ENCODE measurements at regions of chr2 and their contacts with region 1.

Region 1: DNA sequence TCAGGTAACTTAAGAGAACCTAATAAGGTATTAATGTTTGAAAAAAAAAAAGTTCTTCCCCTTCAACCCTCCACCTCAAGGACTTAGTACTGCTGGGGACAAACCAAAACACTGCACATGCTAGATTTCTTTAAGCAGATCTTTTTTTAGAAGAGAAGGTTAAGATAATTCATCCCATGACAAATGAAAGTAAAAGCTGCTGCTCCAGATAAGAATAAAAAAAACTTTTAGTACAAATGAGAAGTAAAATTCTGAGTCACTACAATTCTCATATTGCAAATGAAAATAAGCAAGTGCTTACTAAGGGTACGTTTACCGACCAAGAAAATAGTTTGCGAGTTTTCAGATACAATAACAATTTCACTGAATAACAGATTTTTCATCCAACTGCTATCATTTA is 8.9 kb downstream of the STAM2 start:
- DNase-seq: peak; percentile 81
- ATAC-seq: peak; percentile 83
- H3K4me3 ChIP-seq: no peak overlapping the region
- H3K27ac ChIP-seq: no peak overlapping the region
- H3K4me1 ChIP-seq: peaks cover 8% of the 10 kb centered on the region
- H3K27me3 ChIP-seq: no peaks in the 10 kb centered on the region
- CTCF ChIP-seq: no peak
- POLR2A ChIP-seq: no peak
- RAD21 ChIP-seq: no peak

Region 2: DNA sequence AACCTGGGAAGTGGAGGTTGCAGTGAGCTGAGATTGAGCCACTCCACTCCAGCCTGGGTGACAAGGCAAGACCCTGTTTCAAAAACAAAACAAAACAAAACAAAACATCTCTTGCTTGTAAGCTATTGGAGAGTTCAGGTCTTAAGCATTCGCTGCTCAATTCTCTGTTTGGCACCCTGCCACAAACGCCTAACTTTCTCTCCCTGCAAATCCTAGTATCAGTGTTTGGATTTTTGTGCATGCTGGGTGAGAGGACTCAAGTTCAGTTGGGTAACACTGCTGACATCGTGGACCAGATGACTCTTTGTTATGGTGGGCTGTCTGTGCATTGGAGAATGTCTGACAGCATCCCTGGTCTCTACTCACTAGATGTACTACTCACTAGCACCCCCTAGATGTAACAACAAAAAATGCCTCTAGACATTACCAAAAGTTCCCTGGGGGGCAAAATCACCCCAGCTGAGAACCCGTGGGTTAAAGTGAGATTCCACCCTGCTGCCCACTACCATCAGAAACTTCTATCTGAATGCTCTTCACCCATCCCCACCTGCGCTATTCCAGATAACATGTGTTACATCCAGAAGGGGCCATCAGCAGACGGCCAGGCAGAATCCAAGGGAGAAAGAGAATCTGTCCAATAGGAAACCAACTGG is 118.7 kb before region 1 on chr2:
- CTCF ChIA-PET with region 1: no interaction called
- POLR2A ChIA-PET with region 1: no interaction called
- dilution Hi-C with region 1: no loop called
- in situ Hi-C with region 1: loop called (anchors 10 kb)
- intact Hi-C with region 1: no loop called
- DNase-seq: no peak
- ATAC-seq: no peak
- H3K4me3 ChIP-seq: no peak overlapping the region
- H3K27ac ChIP-seq: no peak overlapping the region
- H3K4me1 ChIP-seq: no peaks in the 10 kb centered on the region
- H3K27me3 ChIP-seq: peaks cover 27% of the 10 kb centered on the region
- CTCF ChIP-seq: no peak; the same call in 1 of the 2 replicates
- POLR2A ChIP-seq: no peak
- RAD21 ChIP-seq: no peak

Region 3: GRCh38 chr2:152062125-152063091 is 104.2 kb before region 1 on chr2:
- CTCF ChIA-PET with region 1: no interaction called
- POLR2A ChIA-PET with region 1: no interaction called
- dilution Hi-C with region 1: no loop called
- in situ Hi-C with region 1: no loop called
- intact Hi-C with region 1: no loop called
- DNase-seq: peak; percentile 73
- ATAC-seq: peak; percentile 94
- H3K4me3 ChIP-seq: no peak overlapping the region
- H3K27ac ChIP-seq: peak overlapping the region; percentile 34
- H3K4me1 ChIP-seq: peaks cover 8% of the 10 kb centered on the region
- H3K27me3 ChIP-seq: peaks cover 1% of the 10 kb centered on the region; the same call in 1 of the 2 replicates
- CTCF ChIP-seq: no peak
- POLR2A ChIP-seq: no peak
- RAD21 ChIP-seq: no peak

Measured in IMR-90 (cell line).